ENCODE measurements at regions of chr7 and their contacts with region 1.

Region 1: DNA sequence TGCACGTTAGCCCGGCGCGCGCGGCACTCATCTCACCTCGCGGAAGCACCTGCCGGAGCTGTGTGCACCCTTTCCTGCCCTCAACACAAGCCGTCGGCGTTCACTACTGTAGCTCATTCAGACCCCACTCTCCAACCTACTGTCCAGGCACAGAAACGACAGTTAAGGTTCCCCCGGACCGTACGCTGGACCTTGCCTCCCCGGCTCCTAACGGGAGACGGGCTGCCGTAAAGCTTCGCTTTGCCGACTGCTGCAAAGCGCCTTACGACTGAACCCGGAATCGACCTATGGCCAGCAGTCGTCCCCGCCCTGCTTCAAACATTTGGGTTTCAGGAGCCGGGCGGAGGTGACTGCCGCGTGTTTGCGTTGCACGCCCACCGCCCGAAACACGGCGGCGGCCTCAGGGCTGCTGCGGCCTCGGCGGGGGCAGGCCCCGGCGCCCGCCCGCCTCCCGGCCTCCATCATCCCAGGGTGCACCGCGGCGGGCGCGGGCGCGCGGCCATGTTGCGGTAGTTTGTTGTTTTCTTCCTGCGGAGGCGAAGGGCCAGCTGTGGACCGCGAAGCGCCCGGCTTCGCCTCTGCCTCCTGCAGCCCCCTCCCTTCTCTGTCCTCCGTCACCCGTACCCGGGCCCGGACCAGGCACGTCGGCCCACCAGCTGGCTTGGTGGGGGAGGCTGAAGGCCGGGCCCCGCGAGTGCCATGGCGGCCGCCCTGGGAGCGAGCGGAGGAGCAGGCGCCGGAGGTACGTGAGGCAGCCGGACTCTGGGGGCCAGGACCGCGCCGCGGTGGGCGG is at the start of gene RBM33:
- DNase-seq: peak; percentile 95
- H3K4me3 Mint-ChIP-seq: peak within 1 kb of the TSS; percentile 92
- H3K27ac Mint-ChIP-seq: peak within 1 kb of the TSS; percentile 97
- H3K4me1 Mint-ChIP-seq: peaks cover 34% of the 10 kb centered on the region
- H3K27me3 Mint-ChIP-seq: no peaks in the 10 kb centered on the region
- total RNA-seq, gene RBM33: 77.2 and 79.5 TPM in 2 replicates

Region 2: GRCh38 chr7:155003376-155004214 is 640.8 kb before region 1 on chr7:
- intact Hi-C with region 1: loop called (anchors 5 kb)
- DNase-seq: peak; percentile 94
- H3K4me3 Mint-ChIP-seq: peak overlapping the region; percentile 94
- H3K27ac Mint-ChIP-seq: peak overlapping the region; percentile 94
- H3K4me1 Mint-ChIP-seq: peaks cover 9% of the 10 kb centered on the region
- H3K27me3 Mint-ChIP-seq: no peaks in the 10 kb centered on the region

Region 3: GRCh38 chr7:155298834-155299534 is 345.4 kb before region 1 on chr7:
- intact Hi-C with region 1: loop called (anchors 5 kb)
- DNase-seq: peak; percentile 99
- H3K4me3 Mint-ChIP-seq: peak overlapping the region; percentile 94
- H3K27ac Mint-ChIP-seq: peak overlapping the region; percentile 97
- H3K4me1 Mint-ChIP-seq: peaks cover 42% of the 10 kb centered on the region
- H3K27me3 Mint-ChIP-seq: no peaks in the 10 kb centered on the region

Region 4: DNA sequence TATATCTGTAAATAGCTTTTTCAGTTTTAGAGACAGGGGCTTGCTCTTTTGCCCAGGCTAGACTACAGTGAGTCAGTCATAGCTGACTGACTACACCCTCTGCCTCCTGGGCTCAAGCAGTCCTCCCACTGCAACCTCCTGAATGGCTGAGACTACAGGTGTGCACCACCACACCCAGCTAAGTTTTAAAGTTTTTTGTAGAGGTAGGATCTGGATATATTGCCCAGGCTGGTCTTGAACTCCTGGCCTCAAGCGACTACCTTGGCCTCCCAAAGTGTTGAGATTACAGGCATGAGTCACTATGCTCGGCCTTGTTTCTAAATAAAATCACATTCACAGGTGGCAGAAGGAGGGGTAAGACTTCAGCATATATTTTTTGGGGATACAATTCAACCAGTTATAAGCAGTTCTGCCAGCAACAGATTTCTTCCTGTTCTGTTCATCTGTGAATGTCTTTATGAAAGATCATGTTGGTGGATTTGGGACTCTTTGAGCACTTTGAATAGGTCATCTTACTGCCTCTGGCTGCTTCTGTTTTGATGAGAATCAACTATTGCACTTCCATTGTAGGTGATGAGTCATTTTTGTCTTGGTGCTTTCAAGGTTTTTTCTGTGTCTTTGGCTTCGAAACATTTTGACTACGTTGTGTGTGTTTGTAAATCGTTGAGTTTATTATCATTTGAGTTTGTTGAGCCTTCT is 15.8 kb after region 1 on chr7:
- intact Hi-C with region 1: loop called (anchors 1 kb)
- DNase-seq: peak; percentile 48
- H3K4me3 Mint-ChIP-seq: peak overlapping the region; percentile 4
- H3K27ac Mint-ChIP-seq: peak overlapping the region; percentile 69
- H3K4me1 Mint-ChIP-seq: peaks cover 40% of the 10 kb centered on the region
- H3K27me3 Mint-ChIP-seq: no peaks in the 10 kb centered on the region

Region 5: GRCh38 chr7:155728116-155728515 is 83.7 kb after region 1 on chr7:
- intact Hi-C with region 1: no loop called
- DNase-seq: peak; percentile 45
- H3K4me3 Mint-ChIP-seq: no peak overlapping the region
- H3K27ac Mint-ChIP-seq: no peak overlapping the region
- H3K4me1 Mint-ChIP-seq: peaks cover 17% of the 10 kb centered on the region
- H3K27me3 Mint-ChIP-seq: no peaks in the 10 kb centered on the region

Region 6: DNA sequence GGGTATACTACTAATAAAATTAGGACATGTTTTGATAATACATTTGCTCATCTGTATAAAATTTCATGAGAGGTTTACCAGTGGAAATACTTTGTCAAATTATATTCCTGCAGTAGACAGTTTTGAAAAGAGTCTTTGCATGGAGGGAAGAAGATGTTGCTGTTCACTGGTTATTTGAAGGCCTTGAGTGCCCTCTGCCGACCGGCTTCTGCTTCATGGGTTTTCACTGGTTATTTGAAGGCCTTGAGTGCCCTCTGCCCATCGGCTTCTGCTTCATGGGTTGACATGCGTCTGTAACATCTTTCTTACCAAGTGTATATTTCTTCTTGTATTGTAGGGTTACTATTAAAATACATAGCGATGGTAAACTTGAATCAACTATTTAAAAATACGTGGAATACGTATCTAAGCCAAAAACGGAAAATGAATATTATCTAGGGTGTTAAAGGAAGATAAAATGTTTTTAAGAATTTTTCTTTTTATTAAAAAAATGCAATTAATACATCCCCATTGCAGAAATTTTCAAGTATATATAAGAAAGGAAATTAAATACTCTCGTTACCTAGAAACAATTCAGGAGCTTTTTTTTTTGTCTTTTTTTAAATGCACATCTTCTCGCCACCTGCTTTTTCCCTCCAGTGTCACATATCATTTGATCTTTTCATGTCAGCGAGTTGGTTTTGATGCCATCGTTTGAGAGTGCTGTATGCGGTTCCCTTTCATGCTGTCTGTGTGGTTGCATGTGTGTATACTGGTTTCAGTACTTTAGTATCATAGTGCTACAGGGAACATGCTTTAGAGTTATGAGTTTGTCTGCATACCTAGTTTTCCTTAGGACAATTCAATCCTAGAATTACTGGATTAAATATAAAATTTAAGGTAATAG is 94.5 kb after region 1 on chr7:
- intact Hi-C with region 1: loop called (anchors 2 kb)
- DNase-seq: peak; percentile 89
- H3K4me3 Mint-ChIP-seq: peak overlapping the region; percentile 52
- H3K27ac Mint-ChIP-seq: peak overlapping the region; percentile 75
- H3K4me1 Mint-ChIP-seq: peaks cover 40% of the 10 kb centered on the region
- H3K27me3 Mint-ChIP-seq: no peaks in the 10 kb centered on the region

Region 7: GRCh38 chr7:155787171-155787851 is 142.9 kb after region 1 on chr7:
- intact Hi-C with region 1: no loop called
- DNase-seq: no peak
- H3K4me3 Mint-ChIP-seq: no peak overlapping the region
- H3K27ac Mint-ChIP-seq: no peak overlapping the region
- H3K4me1 Mint-ChIP-seq: peaks cover 3% of the 10 kb centered on the region
- H3K27me3 Mint-ChIP-seq: peaks cover 17% of the 10 kb centered on the region

Region 8: GRCh38 chr7:155815332-155816191 is 171.2 kb after region 1 on chr7:
- intact Hi-C with region 1: no loop called
- DNase-seq: peak; percentile 93
- H3K4me3 Mint-ChIP-seq: peak overlapping the region; percentile 34
- H3K27ac Mint-ChIP-seq: no peak overlapping the region
- H3K4me1 Mint-ChIP-seq: peaks cover 15% of the 10 kb centered on the region
- H3K27me3 Mint-ChIP-seq: peaks cover 42% of the 10 kb centered on the region

Region 9: DNA sequence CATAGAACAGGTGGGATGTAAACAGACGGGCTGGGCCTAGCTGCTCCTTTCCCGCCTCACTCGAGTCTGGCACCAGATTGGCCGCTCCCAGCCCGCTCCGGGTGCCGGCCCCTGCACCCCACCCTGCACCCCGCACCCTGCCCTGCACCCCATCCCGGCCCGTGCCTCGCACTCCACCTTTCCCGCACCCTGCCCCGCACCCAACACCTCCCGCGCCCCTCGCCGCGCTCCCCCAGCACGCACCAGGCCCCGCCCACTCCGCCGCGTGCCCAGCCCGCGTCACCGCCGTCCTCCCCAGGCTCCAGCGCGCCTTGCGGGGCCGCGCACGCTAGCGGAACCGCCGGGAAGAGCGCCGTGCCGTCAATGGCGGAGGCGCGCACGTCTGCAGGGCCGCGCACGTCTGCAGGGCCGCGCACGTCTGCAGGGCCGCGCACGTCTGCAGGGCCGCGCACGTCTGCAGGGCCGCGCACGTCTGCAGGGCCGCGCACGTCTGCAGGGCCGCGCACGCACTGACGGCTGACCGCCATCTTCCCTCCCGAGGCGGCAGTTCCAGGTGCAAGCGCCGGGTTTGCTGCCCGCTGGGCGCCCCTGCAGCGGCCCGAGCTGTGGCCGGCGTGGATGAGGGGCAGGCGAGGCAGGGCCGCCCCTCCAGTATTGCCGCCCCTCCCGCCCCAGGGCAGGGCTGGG is 1494.2 kb after region 1 on chr7 and contains the start of gene UBE3C:
- intact Hi-C with region 1: loop called (anchors 10 kb)
- DNase-seq: peak; percentile 98
- H3K4me3 Mint-ChIP-seq: peak within 1 kb of the TSS; percentile 88
- H3K27ac Mint-ChIP-seq: peak within 1 kb of the TSS; percentile 99
- H3K4me1 Mint-ChIP-seq: peaks cover 31% of the 10 kb centered on the region
- H3K27me3 Mint-ChIP-seq: no peaks in the 10 kb centered on the region
- total RNA-seq, gene UBE3C: 89.9 and 95.4 TPM in 2 replicates

Measured in activated CD4-positive, alpha-beta T cell treated with anti-CD3 and anti-CD28 coated beads, Interleukin-2, amount 10 ng/mL, durations not matched to agents 24 days and 14 days (primary cell).